ENCODE measurements at regions of chr2 and their contacts with region 1.

Region 1: GRCh38 chr2:86446060-86446459 is 4.9 kb downstream of the KDM3A start:
- DNase-seq: no peak
- ATAC-seq: no peak
- H3K4me3 Mint-ChIP-seq: no peak overlapping the region
- H3K27ac Mint-ChIP-seq: no peak overlapping the region
- H3K4me1 Mint-ChIP-seq: peaks cover 79% of the 10 kb centered on the region
- H3K27me3 Mint-ChIP-seq: no peaks in the 10 kb centered on the region

Region 2: DNA sequence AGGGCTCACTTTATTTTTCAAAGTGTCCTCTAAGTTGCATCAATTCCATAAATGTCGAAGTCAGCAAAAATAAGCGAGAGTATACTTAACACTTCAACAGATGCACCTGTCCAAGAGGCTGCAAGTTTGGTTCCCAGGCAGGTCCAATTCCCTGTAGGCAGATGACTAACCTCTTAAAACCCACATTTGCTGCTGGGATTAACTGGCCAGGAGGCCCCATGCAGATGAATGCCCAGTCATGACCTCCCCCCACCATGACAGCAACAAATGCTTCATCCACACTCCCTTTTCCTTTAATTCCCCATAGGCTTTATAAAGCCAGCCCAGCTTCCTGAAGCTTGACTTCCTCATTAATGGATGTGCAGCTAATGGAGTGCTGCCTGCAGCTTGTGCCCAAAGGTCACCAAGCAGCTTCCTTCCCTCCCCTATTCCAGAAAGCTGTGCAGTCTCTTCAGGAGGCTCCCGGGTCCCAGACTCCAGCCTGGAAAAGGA is 144.3 kb before region 1 on chr2:
- CTCF ChIA-PET with region 1: no interaction called
- POLR2A ChIA-PET with region 1: no interaction called
- intact Hi-C with region 1: no loop called
- DNase-seq: no peak
- ATAC-seq: no peak
- H3K4me3 Mint-ChIP-seq: no peak overlapping the region
- H3K27ac Mint-ChIP-seq: no peak overlapping the region
- H3K4me1 Mint-ChIP-seq: no peaks in the 10 kb centered on the region
- H3K27me3 Mint-ChIP-seq: peaks cover 8% of the 10 kb centered on the region

Region 3: DNA sequence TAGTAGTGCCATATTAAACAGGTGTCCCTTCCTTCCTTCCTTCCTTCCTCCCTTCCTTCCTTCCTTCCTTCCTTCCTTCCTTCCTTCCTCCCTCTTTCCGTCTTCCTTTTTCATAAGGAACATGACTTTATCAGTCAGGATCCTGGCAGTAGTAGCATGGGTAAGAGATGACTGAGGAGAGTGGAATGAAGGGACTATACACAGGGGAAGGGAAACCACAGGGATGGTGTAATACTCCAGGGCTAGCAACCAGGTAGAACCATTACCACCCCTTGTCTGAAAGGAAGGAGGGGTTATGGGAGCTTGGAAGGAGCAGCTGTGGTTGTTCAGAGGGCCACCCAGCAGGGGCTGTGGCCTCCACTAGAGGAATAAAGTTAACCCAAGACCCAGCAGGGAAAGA is 28.1 kb before region 1 on chr2:
- CTCF ChIA-PET with region 1: no interaction called
- POLR2A ChIA-PET with region 1: no interaction called
- intact Hi-C with region 1: no loop called
- DNase-seq: no peak
- ATAC-seq: no peak
- H3K4me3 Mint-ChIP-seq: no peak overlapping the region
- H3K27ac Mint-ChIP-seq: no peak overlapping the region
- H3K4me1 Mint-ChIP-seq: peaks cover 4% of the 10 kb centered on the region
- H3K27me3 Mint-ChIP-seq: peaks cover 16% of the 10 kb centered on the region

Region 4: GRCh38 chr2:86480105-86480504 is 34.0 kb after region 1 on chr2:
- CTCF ChIA-PET with region 1: interaction called, 3 read pairs
- POLR2A ChIA-PET with region 1: no interaction called
- intact Hi-C with region 1: loop called in 1 of 2 experiments (anchors 5 kb)
- DNase-seq: no peak
- ATAC-seq: no peak
- H3K4me3 Mint-ChIP-seq: no peak overlapping the region
- H3K27ac Mint-ChIP-seq: no peak overlapping the region
- H3K4me1 Mint-ChIP-seq: peaks cover 66% of the 10 kb centered on the region
- H3K27me3 Mint-ChIP-seq: no peaks in the 10 kb centered on the region